ENCODE measurements at regions of chr1 and their contacts with region 1.

Region 1: DNA sequence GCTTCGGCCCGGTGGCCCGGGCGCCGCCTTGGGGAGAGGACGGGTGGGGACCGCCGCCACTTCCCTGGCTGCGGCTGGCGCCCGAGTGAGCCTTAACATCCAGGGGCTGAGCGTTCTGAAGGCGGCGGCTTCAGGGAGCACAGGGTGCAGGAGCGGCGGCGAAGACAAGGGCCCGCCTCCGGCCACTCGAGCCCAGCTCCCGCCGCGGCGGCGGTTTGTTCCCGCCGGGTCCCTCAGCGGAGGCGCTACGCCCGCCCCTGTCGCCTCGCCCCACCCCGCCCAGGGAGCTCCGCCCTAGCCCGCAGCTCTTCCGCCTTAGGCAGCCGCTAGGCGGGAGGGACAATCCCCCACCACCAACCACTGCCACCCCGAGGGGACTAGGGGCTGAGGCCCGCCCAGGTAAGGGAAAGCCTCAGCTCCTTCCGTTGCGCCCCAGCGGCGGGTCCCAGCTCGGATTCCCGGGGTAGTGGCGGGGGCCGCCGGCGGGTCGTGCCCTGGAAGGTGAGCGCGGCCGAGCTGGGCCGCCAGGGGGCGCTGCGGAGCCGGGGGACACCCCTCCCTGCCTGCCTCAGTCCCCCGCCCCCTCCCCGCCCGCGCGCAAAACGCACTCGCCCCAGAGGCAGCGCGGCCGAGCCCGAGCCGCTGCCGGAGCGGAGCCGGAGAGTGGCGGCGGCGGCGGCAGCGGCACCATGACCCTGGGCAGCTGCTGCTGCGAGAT is at the start of gene FOXD2:
- DNase-seq: peak; percentile 83 to 95 (median 90)
- ATAC-seq: peak; percentile 85
- H3K4me3 ChIP-seq: peak within 1 kb of the TSS; percentile 67
- H3K4me3 Mint-ChIP-seq: peak within 1 kb of the TSS; percentile 93
- H3K27ac ChIP-seq: no peak within 1 kb of the TSS
- H3K27ac Mint-ChIP-seq: peak within 1 kb of the TSS; percentile 84
- H3K4me1 ChIP-seq: peaks cover 46% of the 10 kb centered on the region
- H3K4me1 Mint-ChIP-seq: peaks cover 34% of the 10 kb centered on the region
- H3K27me3 ChIP-seq: peaks cover 48 to 49% of the 10 kb centered on the region in 2 experiments
- H3K27me3 Mint-ChIP-seq: peaks cover 42% of the 10 kb centered on the region
- CTCF ChIP-seq: peak; percentile 88
- total RNA-seq, gene FOXD2: 0.22 to 0.34 TPM

Region 2: GRCh38 chr1:46724991-46725735 is 712.4 kb before region 1 on chr1:
- CTCF ChIA-PET with region 1: no interaction called
- POLR2A ChIA-PET with region 1: no interaction called
- intact Hi-C with region 1: loop called in 1 of 2 experiments (anchors 10 kb)
- DNase-seq: peak; percentile 48 to 88 (median 61)
- ATAC-seq: peak; percentile 100
- H3K4me3 ChIP-seq: no peak overlapping the region
- H3K4me3 Mint-ChIP-seq: no peak overlapping the region
- H3K27ac ChIP-seq: no peak overlapping the region
- H3K27ac Mint-ChIP-seq: no peak overlapping the region
- H3K4me1 ChIP-seq: peaks cover 5% of the 10 kb centered on the region
- H3K4me1 Mint-ChIP-seq: peaks cover 4% of the 10 kb centered on the region
- H3K27me3 ChIP-seq: peaks cover 10% of the 10 kb centered on the region in 2 experiments
- H3K27me3 Mint-ChIP-seq: peaks cover 36% of the 10 kb centered on the region
- CTCF ChIP-seq: peak; percentile 74

Region 3: GRCh38 chr1:47313915-47314664 is 123.5 kb before region 1 on chr1 and contains the start of gene STIL:
- CTCF ChIA-PET with region 1: interaction called, 5 read pairs
- POLR2A ChIA-PET with region 1: interaction called, 8 read pairs
- intact Hi-C with region 1: loop called (anchors 5 to 10 kb)
- DNase-seq: peak; percentile 91 to 99 (median 94)
- ATAC-seq: peak; percentile 94
- H3K4me3 ChIP-seq: peak within 1 kb of the TSS; percentile 84
- H3K4me3 Mint-ChIP-seq: peak within 1 kb of the TSS; percentile 93
- H3K27ac ChIP-seq: peak within 1 kb of the TSS; percentile 46 to 86
- H3K27ac Mint-ChIP-seq: peak within 1 kb of the TSS; percentile 91
- H3K4me1 ChIP-seq: peaks cover 11% of the 10 kb centered on the region
- H3K4me1 Mint-ChIP-seq: peaks cover 19% of the 10 kb centered on the region
- H3K27me3 ChIP-seq: no peaks in the 10 kb centered on the region
- H3K27me3 Mint-ChIP-seq: no peaks in the 10 kb centered on the region
- CTCF ChIP-seq: no peak
- total RNA-seq, gene STIL: 1.7 to 2.1 TPM

Region 4: GRCh38 chr1:47333922-47334764 is 103.5 kb before region 1 on chr1:
- CTCF ChIA-PET with region 1: interaction called, 18 read pairs
- POLR2A ChIA-PET with region 1: interaction called, 4 read pairs
- intact Hi-C with region 1: loop called in 1 of 2 experiments (anchors 5 kb)
- DNase-seq: peak; percentile 44 to 89 (median 59)
- ATAC-seq: peak; percentile 88
- H3K4me3 ChIP-seq: peak overlapping the region; percentile 82
- H3K4me3 Mint-ChIP-seq: peak overlapping the region; percentile 96
- H3K27ac ChIP-seq: peak overlapping the region; percentile 80 to 84
- H3K27ac Mint-ChIP-seq: peak overlapping the region; percentile 90
- H3K4me1 ChIP-seq: peaks cover 34% of the 10 kb centered on the region
- H3K4me1 Mint-ChIP-seq: peaks cover 21% of the 10 kb centered on the region
- H3K27me3 ChIP-seq: no peaks in the 10 kb centered on the region
- H3K27me3 Mint-ChIP-seq: no peaks in the 10 kb centered on the region
- CTCF ChIP-seq: no peak

Region 5: GRCh38 chr1:47449822-47450552 is 12.4 kb after region 1 on chr1:
- CTCF ChIA-PET with region 1: interaction called, 20 read pairs
- POLR2A ChIA-PET with region 1: interaction called, 4 read pairs
- intact Hi-C with region 1: no loop called
- DNase-seq: peak in 1 of 14 experiments; percentile 24
- ATAC-seq: no peak
- H3K4me3 ChIP-seq: no peak overlapping the region
- H3K4me3 Mint-ChIP-seq: no peak overlapping the region
- H3K27ac ChIP-seq: no peak overlapping the region
- H3K27ac Mint-ChIP-seq: no peak overlapping the region
- H3K4me1 ChIP-seq: peaks cover 18% of the 10 kb centered on the region
- H3K4me1 Mint-ChIP-seq: peaks cover 4% of the 10 kb centered on the region
- H3K27me3 ChIP-seq: peaks cover 69 to 82% of the 10 kb centered on the region in 2 experiments
- H3K27me3 Mint-ChIP-seq: peaks cover 7% of the 10 kb centered on the region
- CTCF ChIP-seq: no peak

Region 6: GRCh38 chr1:47710329-47711071 is 272.9 kb after region 1 on chr1:
- CTCF ChIA-PET with region 1: interaction called, 12 read pairs
- POLR2A ChIA-PET with region 1: interaction called, 4 read pairs
- intact Hi-C with region 1: loop called (anchors 1 kb)
- DNase-seq: peak; percentile 26 to 76 (median 56)
- ATAC-seq: peak; percentile 65
- H3K4me3 ChIP-seq: no peak overlapping the region
- H3K4me3 Mint-ChIP-seq: no peak overlapping the region
- H3K27ac ChIP-seq: no peak overlapping the region
- H3K27ac Mint-ChIP-seq: no peak overlapping the region
- H3K4me1 ChIP-seq: peaks cover 25% of the 10 kb centered on the region
- H3K4me1 Mint-ChIP-seq: peaks cover 8% of the 10 kb centered on the region
- H3K27me3 ChIP-seq: peaks cover 65 to 85% of the 10 kb centered on the region in 2 experiments
- H3K27me3 Mint-ChIP-seq: peaks cover 89% of the 10 kb centered on the region
- CTCF ChIP-seq: peak; percentile 90

Region 7: DNA sequence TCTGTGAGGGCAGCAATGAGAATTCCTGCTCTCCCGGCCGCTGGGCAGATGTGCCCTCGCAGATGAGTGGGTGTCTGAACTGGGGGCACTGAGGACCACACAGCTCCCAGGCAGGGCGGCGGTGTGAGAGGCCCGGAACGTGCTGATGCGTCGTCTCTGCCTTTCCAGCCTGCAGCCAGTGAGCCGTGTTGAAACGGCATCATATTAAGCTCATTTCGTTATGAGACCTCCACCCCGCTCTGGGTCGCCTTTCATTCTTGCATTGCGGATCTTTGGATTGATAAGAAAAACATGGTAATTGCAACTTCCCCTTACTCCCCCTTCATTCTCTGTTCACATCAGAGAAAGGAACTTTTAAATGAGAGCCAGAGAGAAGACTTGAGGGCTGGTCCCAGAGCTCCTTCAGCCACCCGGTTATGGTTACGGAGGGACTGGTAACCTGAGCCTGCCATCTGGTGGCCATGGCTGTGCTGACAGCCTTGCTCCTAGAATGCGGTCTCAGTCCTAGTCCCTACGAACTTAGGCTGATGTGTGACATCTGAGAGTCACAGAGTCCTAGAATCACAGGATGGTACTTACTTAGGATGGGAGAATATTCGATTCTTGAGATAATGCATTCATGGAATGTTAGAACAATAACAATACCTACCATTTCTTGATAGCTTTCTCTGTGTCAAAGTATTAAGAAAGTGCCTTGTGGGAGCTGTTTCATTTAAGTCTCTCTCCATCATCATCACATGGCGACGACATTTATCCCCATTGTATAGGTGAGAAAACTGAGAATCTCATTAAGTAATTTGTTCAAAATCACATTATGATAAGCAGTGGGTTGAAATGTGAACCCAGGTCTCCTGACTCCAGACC is 288.6 kb after region 1 on chr1:
- CTCF ChIA-PET with region 1: interaction called, 9 read pairs
- POLR2A ChIA-PET with region 1: interaction called, 4 read pairs
- intact Hi-C with region 1: loop called (anchors 2 to 5 kb)
- DNase-seq: peak; percentile 37 to 72 (median 50)
- ATAC-seq: peak; percentile 83
- H3K4me3 ChIP-seq: no peak overlapping the region
- H3K4me3 Mint-ChIP-seq: peak overlapping the region; percentile 54
- H3K27ac ChIP-seq: no peak overlapping the region
- H3K27ac Mint-ChIP-seq: no peak overlapping the region
- H3K4me1 ChIP-seq: peaks cover 7% of the 10 kb centered on the region
- H3K4me1 Mint-ChIP-seq: peaks cover 10% of the 10 kb centered on the region
- H3K27me3 ChIP-seq: peaks cover 20 to 52% of the 10 kb centered on the region in 2 experiments
- H3K27me3 Mint-ChIP-seq: peaks cover 71% of the 10 kb centered on the region
- CTCF ChIP-seq: peak; percentile 70

Region 8: GRCh38 chr1:47755101-47755990 is 317.7 kb after region 1 on chr1:
- CTCF ChIA-PET with region 1: no interaction called
- POLR2A ChIA-PET with region 1: no interaction called
- intact Hi-C with region 1: no loop called
- DNase-seq: peak in 13 of 14 experiments; percentile 18 to 55 (median 30)
- ATAC-seq: no peak
- H3K4me3 ChIP-seq: no peak overlapping the region
- H3K4me3 Mint-ChIP-seq: no peak overlapping the region
- H3K27ac ChIP-seq: no peak overlapping the region
- H3K27ac Mint-ChIP-seq: no peak overlapping the region
- H3K4me1 ChIP-seq: no peaks in the 10 kb centered on the region
- H3K4me1 Mint-ChIP-seq: no peaks in the 10 kb centered on the region
- H3K27me3 ChIP-seq: no peaks in the 10 kb centered on the region
- H3K27me3 Mint-ChIP-seq: peaks cover 26% of the 10 kb centered on the region
- CTCF ChIP-seq: peak; percentile 55

Measured in CD4-positive, alpha-beta T cell (primary cell).